Naive thymus-derived CD4-positive, alpha-beta T cell (primary cell): ENCODE measurements at regions of chr14 and their contacts with region 1.

Region 1: GRCh38 chr14:89915114-89915878 is 39.2 kb downstream of the EFCAB11 start:
- DNase-seq: peak in 8 of 9 donors; percentile 22 to 65 (median 50)
- ATAC-seq: peak; percentile 65
- H3K4me3 ChIP-seq: no peak overlapping the region
- H3K4me3 Mint-ChIP-seq: no peak overlapping the region
- H3K27ac ChIP-seq: no peak overlapping the region
- H3K27ac Mint-ChIP-seq: no peak overlapping the region
- H3K4me1 ChIP-seq: peaks cover 0 to 4% of the 10 kb centered on the region in 2 donors
- H3K4me1 Mint-ChIP-seq: peaks cover 0 to 4% (median 3%) of the 10 kb centered on the region in 7 donors
- H3K27me3 ChIP-seq: no peaks in the 10 kb centered on the region
- H3K27me3 Mint-ChIP-seq: peaks cover 0 to 22% (median 11%) of the 10 kb centered on the region in 5 donors

Region 2: DNA sequence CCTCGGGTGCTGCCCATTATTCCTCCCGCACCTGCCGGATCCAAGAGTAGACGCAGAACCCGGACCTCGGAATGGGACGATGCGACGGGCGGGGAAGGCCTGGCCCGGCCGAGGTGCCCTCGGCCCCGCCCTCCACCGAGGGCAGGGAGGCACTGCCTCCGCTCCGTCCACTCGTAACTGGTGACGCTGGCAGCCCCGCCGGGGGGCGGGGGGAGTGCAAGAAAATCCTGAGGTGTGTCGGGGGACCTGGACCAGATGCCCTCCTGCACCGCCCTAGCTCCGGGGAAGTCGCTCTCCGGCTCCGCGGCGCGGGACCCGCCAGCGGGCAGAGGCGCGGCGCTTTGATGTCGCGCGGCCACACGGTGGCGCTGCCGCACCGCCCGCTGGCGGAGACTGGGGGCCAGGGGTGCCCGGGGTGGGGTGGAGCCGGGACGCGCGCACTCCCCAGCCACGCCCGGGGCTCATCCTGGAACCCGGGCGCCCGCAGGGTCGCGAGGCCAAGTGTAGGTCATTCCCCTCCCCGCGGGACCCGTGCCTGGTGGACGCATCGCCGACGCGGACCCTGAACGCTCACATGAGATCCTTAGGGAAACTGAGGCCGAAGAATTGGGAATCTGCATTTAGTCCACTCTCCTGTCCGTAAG is 888.1 kb before region 1 on chr14:
- CTCF ChIA-PET with region 1: interaction called, 5 read pairs
- POLR2A ChIA-PET with region 1: no interaction called
- intact Hi-C with region 1: loop called (anchors 1 kb)
- DNase-seq: peak; percentile 32 to 76 (median 63)
- ATAC-seq: peak; percentile 92
- H3K4me3 ChIP-seq: peak overlapping the region; percentile 66
- H3K4me3 Mint-ChIP-seq: peak overlapping the region; percentile 65 to 79 (median 68)
- H3K27ac ChIP-seq: no peak overlapping the region
- H3K27ac Mint-ChIP-seq: no peak overlapping the region
- H3K4me1 ChIP-seq: peaks cover 4 to 5% of the 10 kb centered on the region in 2 donors
- H3K4me1 Mint-ChIP-seq: peaks cover 0 to 7% (median 0%) of the 10 kb centered on the region in 7 donors
- H3K27me3 ChIP-seq: peaks cover 0 to 15% of the 10 kb centered on the region in 2 donors
- H3K27me3 Mint-ChIP-seq: peaks cover 63 to 79% (median 67%) of the 10 kb centered on the region in 5 donors

Region 3: DNA sequence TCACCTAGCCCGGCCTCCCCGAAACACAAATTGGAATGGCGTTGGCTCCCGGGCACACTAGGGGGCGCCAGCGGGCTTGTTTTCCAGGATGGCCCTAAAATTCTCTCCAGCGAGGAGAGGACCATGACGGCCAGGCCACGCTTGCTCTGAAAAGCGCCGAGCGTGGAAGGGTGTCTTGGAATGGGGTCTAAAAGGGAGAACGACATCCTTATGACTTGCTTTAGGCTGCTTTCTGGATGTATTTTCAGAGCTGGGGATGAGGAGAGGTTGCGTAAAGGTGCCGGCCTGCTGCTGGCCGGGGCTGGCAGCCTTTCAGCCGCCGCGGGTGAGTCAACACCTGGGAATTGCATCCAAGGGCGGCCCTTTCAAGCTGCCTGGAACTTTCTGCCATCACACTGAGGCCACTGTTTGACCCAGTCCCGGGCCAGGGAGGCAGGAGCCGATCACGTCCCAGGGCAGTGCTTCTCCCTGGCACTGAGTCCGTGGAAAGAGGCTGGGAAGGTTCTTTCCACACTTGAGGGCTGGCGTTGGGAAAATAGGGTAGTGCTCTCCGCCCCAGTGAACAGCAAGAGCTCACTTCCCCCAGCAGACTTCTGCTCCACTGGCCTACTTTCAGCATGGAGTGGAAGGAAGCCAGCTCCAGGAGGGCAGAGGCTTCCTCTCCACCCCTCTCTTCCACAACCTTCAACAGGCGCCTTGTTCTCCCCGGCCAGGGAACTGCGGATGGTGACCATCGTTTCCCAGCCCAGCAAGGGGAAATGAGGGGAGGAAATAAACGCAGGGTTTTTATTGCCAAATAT is 874.6 kb before region 1 on chr14:
- CTCF ChIA-PET with region 1: interaction called, 5 read pairs
- POLR2A ChIA-PET with region 1: no interaction called
- intact Hi-C with region 1: loop called (anchors 1 kb)
- DNase-seq: peak; percentile 54 to 84 (median 71)
- ATAC-seq: peak; percentile 88
- H3K4me3 ChIP-seq: peak overlapping the region; percentile 48
- H3K4me3 Mint-ChIP-seq: peak overlapping the region; percentile 59 to 89 (median 74)
- H3K27ac ChIP-seq: no peak overlapping the region
- H3K27ac Mint-ChIP-seq: no peak overlapping the region
- H3K4me1 ChIP-seq: peaks cover 6 to 10% of the 10 kb centered on the region in 2 donors
- H3K4me1 Mint-ChIP-seq: peaks cover 0 to 16% (median 13%) of the 10 kb centered on the region in 7 donors
- H3K27me3 ChIP-seq: peaks cover 0 to 3% of the 10 kb centered on the region in 2 donors
- H3K27me3 Mint-ChIP-seq: peaks cover 23 to 36% (median 27%) of the 10 kb centered on the region in 5 donors

Region 4: GRCh38 chr14:89330236-89331002 is 584.9 kb before region 1 on chr14:
- CTCF ChIA-PET with region 1: no interaction called
- POLR2A ChIA-PET with region 1: no interaction called
- intact Hi-C with region 1: loop called in 1 of 2 experiments (anchors 10 kb)
- DNase-seq: no peak
- ATAC-seq: no peak
- H3K4me3 ChIP-seq: no peak overlapping the region
- H3K4me3 Mint-ChIP-seq: peak overlapping the region in 1 of 10 donors; percentile 7
- H3K27ac ChIP-seq: no peak overlapping the region
- H3K27ac Mint-ChIP-seq: peak overlapping the region in 3 of 9 donors; percentile 19 to 48 (median 28)
- H3K4me1 ChIP-seq: peaks cover 4 to 15% of the 10 kb centered on the region in 2 donors
- H3K4me1 Mint-ChIP-seq: peaks cover 16 to 77% (median 66%) of the 10 kb centered on the region in 7 donors
- H3K27me3 ChIP-seq: no peaks in the 10 kb centered on the region
- H3K27me3 Mint-ChIP-seq: no peaks in the 10 kb centered on the region

Region 5: GRCh38 chr14:89848165-89848564 is 67.1 kb before region 1 on chr14:
- CTCF ChIA-PET with region 1: no interaction called
- POLR2A ChIA-PET with region 1: no interaction called
- intact Hi-C with region 1: no loop called
- DNase-seq: no peak
- ATAC-seq: no peak
- H3K4me3 ChIP-seq: no peak overlapping the region
- H3K4me3 Mint-ChIP-seq: no peak overlapping the region
- H3K27ac ChIP-seq: no peak overlapping the region
- H3K27ac Mint-ChIP-seq: no peak overlapping the region
- H3K4me1 ChIP-seq: no peaks in the 10 kb centered on the region
- H3K4me1 Mint-ChIP-seq: no peaks in the 10 kb centered on the region
- H3K27me3 ChIP-seq: no peaks in the 10 kb centered on the region
- H3K27me3 Mint-ChIP-seq: peaks cover 0 to 4% (median 0%) of the 10 kb centered on the region in 5 donors

Region 6: DNA sequence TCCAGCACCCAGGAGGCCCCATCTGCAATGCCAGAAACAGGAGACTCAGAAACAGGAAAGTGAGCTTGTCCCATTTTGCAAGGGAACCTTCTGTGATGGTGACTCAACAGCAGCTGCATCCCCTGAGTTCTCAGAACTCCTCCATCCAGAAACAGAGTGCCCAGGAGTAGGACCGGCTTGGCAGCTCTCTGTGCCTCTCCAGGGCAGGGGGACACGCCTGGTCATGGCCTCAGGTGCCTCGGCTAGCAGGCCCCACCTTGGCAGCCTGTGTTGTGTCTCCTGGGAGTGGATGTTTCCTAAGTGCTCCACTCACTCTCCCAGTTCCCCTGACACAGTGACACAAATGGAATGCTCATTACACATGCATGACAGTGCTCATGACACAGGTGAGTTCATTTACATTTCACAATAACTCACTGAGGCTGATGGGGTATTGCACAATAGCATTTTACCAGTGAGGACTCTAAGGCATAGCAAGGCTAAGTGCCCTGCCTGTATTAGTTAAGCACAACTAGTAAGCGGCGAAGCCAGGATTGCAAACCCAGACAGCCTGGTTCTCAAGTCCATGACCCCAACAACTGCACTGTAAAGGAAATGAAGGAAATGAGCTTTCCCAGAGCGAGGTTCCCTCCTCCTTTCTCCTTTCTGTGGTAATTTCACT is 528.9 kb after region 1 on chr14:
- CTCF ChIA-PET with region 1: no interaction called
- POLR2A ChIA-PET with region 1: no interaction called
- intact Hi-C with region 1: no loop called
- DNase-seq: no peak
- ATAC-seq: no peak
- H3K4me3 ChIP-seq: no peak overlapping the region
- H3K4me3 Mint-ChIP-seq: no peak overlapping the region
- H3K27ac ChIP-seq: no peak overlapping the region
- H3K27ac Mint-ChIP-seq: no peak overlapping the region
- H3K4me1 ChIP-seq: no peaks in the 10 kb centered on the region
- H3K4me1 Mint-ChIP-seq: peaks cover 0 to 7% (median 0%) of the 10 kb centered on the region in 7 donors
- H3K27me3 ChIP-seq: no peaks in the 10 kb centered on the region
- H3K27me3 Mint-ChIP-seq: peaks cover 0 to 6% (median 3%) of the 10 kb centered on the region in 5 donors